Panc1 (cell line): ENCODE measurements at regions of chr3 and their contacts with region 1.

Region 1: DNA sequence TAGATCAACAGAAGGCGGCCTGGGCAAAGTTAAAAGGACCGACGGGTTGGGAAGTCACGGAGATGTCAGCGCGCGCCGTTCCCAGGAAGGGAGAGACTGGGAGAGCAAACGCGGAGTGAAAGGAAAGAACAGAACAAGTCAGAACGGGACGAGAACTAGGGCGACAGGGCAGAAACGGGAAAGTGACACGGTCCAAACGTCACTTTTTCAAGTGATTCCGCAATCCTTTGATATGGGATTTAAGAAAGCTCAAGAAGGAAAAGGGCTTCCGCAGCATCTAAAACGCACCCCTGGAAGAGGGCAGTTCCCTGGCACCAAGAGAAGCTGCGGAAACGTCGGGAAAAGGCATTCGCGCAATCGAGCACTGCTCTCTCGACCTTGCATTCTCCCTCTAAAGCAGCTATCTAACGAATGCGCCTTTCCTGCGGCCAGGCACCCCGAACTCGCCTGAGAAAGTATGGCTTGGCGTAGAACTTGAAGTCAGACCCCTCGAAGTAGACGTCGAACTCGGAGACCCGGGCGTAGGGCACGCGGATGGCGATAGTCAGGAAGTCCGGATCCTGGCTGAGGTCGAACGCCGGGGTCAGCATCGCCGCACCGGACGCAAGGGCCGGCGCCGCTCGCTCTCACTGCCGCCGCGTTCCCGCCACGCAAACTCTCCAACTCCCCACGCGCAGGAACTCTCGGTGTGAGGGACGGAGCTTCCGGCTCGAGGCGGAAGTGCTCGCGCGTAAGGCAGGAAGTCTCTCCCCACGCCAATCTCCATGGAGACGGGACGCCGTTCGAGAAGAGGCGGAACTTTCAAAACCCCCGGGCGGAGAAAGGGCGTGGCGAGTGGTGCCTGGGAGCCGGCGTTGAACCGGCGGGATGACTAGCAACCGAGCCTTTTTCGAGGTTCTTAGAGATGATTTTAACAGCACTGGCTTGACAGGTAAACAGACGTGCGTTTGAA is at the start of gene SHQ1:
- DNase-seq: peak; percentile 54
- ATAC-seq: peak; percentile 99
- H3K4me3 ChIP-seq: peak within 1 kb of the TSS; percentile 95 to 98
- H3K27ac ChIP-seq: peak within 1 kb of the TSS; percentile 80
- H3K4me1 ChIP-seq: peaks cover 6% of the 10 kb centered on the region
- H3K27me3 ChIP-seq: no peaks in the 10 kb centered on the region
- CTCF ChIP-seq: no peak
- total RNA-seq, gene SHQ1: 21.0 TPM

Region 2: DNA sequence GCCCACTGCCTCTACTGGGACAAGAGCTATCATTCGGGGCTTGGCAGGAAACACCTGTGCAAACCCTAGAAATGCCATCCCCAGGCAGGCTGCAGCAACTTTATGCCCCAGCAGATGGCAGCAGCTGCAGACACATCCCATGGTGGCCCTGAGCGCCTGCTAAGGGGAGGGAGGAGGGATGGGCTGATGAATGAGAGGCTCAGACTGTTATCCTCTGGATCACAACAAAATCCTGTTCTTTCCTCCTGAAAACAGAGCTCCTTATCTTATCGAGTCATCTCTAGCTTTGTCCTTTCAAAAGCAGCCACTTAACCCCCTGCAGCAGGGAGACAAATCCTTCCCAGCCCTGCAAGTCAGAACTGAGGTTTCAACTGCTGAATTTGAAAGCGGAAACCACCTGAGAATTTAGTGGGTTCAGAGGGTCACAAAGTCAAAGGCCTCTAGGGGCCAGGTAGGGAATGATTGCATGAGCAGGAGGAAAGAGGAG is 972.5 kb before region 1 on chr3:
- CTCF ChIA-PET with region 1: no interaction called
- POLR2A ChIA-PET with region 1: no interaction called
- in situ Hi-C with region 1: no loop called
- intact Hi-C with region 1: no loop called
- DNase-seq: peak; percentile 24
- ATAC-seq: peak; percentile 90
- H3K4me3 ChIP-seq: no peak overlapping the region
- H3K27ac ChIP-seq: no peak overlapping the region
- H3K4me1 ChIP-seq: no peaks in the 10 kb centered on the region
- H3K27me3 ChIP-seq: 0 out of 2 replicates have a peak, but pooled peaks cover 2% of the 10 kb centered on the region
- CTCF ChIP-seq: peak; percentile 83

Region 3: DNA sequence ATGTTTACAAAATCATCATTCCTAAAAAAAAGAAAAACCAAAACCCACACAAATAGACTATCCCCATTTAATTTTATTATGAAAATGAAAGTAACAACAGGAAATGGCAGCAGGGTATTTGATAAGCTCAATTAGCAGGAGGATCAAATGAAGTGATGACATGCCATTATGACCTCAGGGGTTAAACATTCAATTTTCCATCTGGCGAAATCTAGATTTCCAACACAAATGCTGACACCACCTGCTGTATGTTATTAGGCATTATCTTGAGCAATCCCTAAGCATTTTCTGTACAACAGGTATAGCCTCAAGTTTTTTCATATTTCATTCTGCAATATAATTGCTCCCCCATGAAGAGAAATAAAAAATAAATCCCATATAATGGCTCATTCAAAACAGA is 56.9 kb before region 1 on chr3:
- CTCF ChIA-PET with region 1: no interaction called
- POLR2A ChIA-PET with region 1: no interaction called
- in situ Hi-C with region 1: no loop called
- intact Hi-C with region 1: no loop called
- DNase-seq: no peak
- ATAC-seq: no peak
- H3K4me3 ChIP-seq: no peak overlapping the region
- H3K27ac ChIP-seq: no peak overlapping the region
- H3K4me1 ChIP-seq: no peaks in the 10 kb centered on the region
- H3K27me3 ChIP-seq: no peaks in the 10 kb centered on the region
- CTCF ChIP-seq: no peak

Region 4: GRCh38 chr3:72896996-72897757 is 49.1 kb after region 1 on chr3:
- CTCF ChIA-PET with region 1: no interaction called
- POLR2A ChIA-PET with region 1: no interaction called
- in situ Hi-C with region 1: no loop called
- intact Hi-C with region 1: loop called (anchors 2 kb)
- DNase-seq: no peak
- ATAC-seq: no peak
- H3K4me3 ChIP-seq: no peak overlapping the region
- H3K27ac ChIP-seq: no peak overlapping the region
- H3K4me1 ChIP-seq: no peaks in the 10 kb centered on the region
- H3K27me3 ChIP-seq: no peaks in the 10 kb centered on the region
- CTCF ChIP-seq: no peak

Region 5: GRCh38 chr3:72977060-72977808 is 129.2 kb after region 1 on chr3:
- CTCF ChIA-PET with region 1: no interaction called
- POLR2A ChIA-PET with region 1: no interaction called
- in situ Hi-C with region 1: no loop called
- intact Hi-C with region 1: no loop called
- DNase-seq: no peak
- ATAC-seq: no peak
- H3K4me3 ChIP-seq: no peak overlapping the region
- H3K27ac ChIP-seq: no peak overlapping the region
- H3K4me1 ChIP-seq: no peaks in the 10 kb centered on the region
- H3K27me3 ChIP-seq: no peaks in the 10 kb centered on the region
- CTCF ChIP-seq: no peak

Region 6: GRCh38 chr3:73086071-73086494 is 238.1 kb after region 1 on chr3:
- CTCF ChIA-PET with region 1: interaction called, 4 read pairs
- POLR2A ChIA-PET with region 1: no interaction called
- in situ Hi-C with region 1: no loop called
- intact Hi-C with region 1: loop called (anchors 2 kb)
- DNase-seq: no peak
- ATAC-seq: peak; percentile 73
- H3K4me3 ChIP-seq: no peak overlapping the region
- H3K27ac ChIP-seq: no peak overlapping the region
- H3K4me1 ChIP-seq: no peaks in the 10 kb centered on the region
- H3K27me3 ChIP-seq: no peaks in the 10 kb centered on the region
- CTCF ChIP-seq: peak; percentile 79